Activated naive CD4-positive, alpha-beta T cell treated with anti-CD3 and anti-CD28 coated beads for 36 hours (primary cell): ENCODE measurements at regions of chr3 and their contacts with region 1.

Region 1: DNA sequence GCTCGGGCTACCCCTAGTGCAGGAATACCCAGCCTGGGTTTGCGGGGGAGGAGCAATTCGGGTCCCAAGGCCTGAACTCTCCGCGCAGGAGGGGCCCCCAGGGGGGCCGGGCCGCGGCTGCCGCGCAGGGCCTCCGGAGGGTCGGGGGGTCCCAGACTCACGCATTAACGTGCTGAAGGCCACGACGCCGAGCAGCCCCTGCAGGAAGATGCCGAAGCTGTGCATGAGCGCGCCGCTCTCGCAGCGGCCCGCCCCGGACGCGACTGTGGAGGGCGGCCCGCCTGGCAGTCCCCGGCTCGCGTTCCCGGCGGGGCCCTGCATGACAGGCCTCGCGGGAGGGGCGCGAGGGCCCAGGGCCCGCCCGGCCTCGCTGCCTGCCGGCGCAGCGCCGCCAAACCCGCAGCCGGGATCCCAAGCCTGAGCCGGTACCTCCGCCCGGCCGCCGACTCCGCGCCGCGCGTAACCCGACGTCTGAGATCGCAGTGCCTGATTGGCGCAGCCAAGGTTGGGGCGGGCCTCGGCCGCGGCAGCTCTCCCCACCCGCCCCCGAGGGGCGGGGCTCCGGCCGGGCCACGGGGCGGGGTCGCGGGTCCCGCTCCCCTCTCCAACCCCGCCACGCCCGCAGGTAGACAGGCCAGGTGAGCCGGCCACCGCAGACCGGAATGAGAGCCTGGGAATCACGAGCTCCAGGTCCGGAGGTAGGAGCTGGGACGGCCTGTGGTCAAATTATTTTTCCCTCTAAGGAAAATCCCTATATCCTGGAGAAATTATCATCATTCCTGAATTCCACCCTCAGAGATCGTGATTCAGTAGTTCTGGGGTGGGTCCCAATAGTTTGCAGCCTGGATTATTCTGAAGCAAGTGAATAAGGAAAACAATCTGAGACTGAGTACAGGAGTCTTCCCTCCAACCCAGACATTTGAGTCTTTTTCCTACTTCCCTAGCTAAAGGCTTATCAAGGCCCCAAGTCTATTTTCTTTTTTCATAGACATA is at the start of gene STIMATE:
- DNase-seq: peak; percentile 86
- H3K4me3 Mint-ChIP-seq: peak within 1 kb of the TSS; percentile 84
- H3K27ac Mint-ChIP-seq: no peak within 1 kb of the TSS
- H3K4me1 Mint-ChIP-seq: peaks cover 39% of the 10 kb centered on the region
- H3K27me3 Mint-ChIP-seq: no peaks in the 10 kb centered on the region
- total RNA-seq, gene STIMATE: 7.7 to 9.7 TPM

Region 2: GRCh38 chr3:52636673-52637072 is 260.8 kb before region 1 on chr3:
- CTCF ChIA-PET with region 1: no interaction called
- intact Hi-C with region 1: no loop called
- DNase-seq: no peak
- H3K4me3 Mint-ChIP-seq: no peak overlapping the region
- H3K27ac Mint-ChIP-seq: no peak overlapping the region
- H3K4me1 Mint-ChIP-seq: no peaks in the 10 kb centered on the region
- H3K27me3 Mint-ChIP-seq: no peaks in the 10 kb centered on the region

Region 3: DNA sequence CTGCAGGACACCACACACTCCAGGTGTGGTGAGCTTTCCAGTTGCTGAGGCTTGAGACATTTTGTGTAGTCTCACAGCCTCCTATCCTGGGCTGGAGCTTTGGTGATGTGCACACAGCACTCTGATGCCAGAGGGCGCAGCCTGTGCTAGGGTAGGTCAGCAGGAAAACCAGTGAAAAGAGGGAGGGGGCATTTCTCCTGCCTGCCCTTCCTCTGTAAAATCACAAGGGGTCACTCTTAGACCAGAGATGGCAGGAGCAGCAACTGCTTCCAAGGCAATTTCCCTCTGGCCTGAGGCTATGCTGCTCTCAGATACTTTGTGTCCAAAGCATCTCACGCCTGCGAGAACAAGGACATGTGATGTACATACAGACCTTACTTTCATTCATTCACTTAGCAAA is 46.1 kb before region 1 on chr3:
- CTCF ChIA-PET with region 1: interaction called, 3 read pairs
- intact Hi-C with region 1: loop called (anchors 5 kb)
- DNase-seq: peak; percentile 42
- H3K4me3 Mint-ChIP-seq: no peak overlapping the region
- H3K27ac Mint-ChIP-seq: no peak overlapping the region
- H3K4me1 Mint-ChIP-seq: no peaks in the 10 kb centered on the region
- H3K27me3 Mint-ChIP-seq: no peaks in the 10 kb centered on the region

Region 4: DNA sequence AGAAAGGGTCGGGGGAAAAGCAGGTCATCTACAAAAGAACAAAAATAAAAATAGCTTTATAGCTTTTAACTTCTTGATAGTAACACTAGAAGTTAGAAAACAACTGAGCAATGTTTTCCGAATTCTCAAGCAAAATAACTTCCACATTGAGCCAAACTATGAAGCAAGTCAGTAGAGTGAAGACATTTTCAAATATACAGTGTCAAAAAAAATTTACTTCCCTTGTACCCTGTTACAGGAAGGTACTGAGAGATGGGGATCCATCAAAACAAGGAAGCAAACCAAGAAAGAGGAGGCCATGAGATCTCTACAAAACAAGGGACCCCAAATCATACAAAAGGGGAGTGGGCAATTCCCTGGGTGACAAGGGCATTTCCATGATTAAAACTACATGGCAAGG is 26.5 kb after region 1 on chr3:
- CTCF ChIA-PET with region 1: no interaction called
- intact Hi-C with region 1: loop called (anchors 2 kb)
- DNase-seq: no peak
- H3K4me3 Mint-ChIP-seq: no peak overlapping the region
- H3K27ac Mint-ChIP-seq: no peak overlapping the region
- H3K4me1 Mint-ChIP-seq: peaks cover 9% of the 10 kb centered on the region
- H3K27me3 Mint-ChIP-seq: no peaks in the 10 kb centered on the region

Region 5: GRCh38 chr3:52983336-52983807 is 85.9 kb after region 1 on chr3:
- CTCF ChIA-PET with region 1: no interaction called
- intact Hi-C with region 1: loop called (anchors 1 kb)
- DNase-seq: peak; percentile 81
- H3K4me3 Mint-ChIP-seq: peak overlapping the region; percentile 31
- H3K27ac Mint-ChIP-seq: peak overlapping the region; percentile 85
- H3K4me1 Mint-ChIP-seq: peaks cover 42% of the 10 kb centered on the region
- H3K27me3 Mint-ChIP-seq: no peaks in the 10 kb centered on the region

Region 6: GRCh38 chr3:53891497-53892285 is 994.3 kb after region 1 on chr3 and contains the start of gene SELENOK:
- CTCF ChIA-PET with region 1: no interaction called
- intact Hi-C with region 1: loop called (anchors 10 kb)
- DNase-seq: peak; percentile 99
- H3K4me3 Mint-ChIP-seq: peak within 1 kb of the TSS; percentile 91
- H3K27ac Mint-ChIP-seq: peak within 1 kb of the TSS; percentile 96
- H3K4me1 Mint-ChIP-seq: peaks cover 47% of the 10 kb centered on the region
- H3K27me3 Mint-ChIP-seq: no peaks in the 10 kb centered on the region
- total RNA-seq, gene SELENOK: 29.6 to 36.1 TPM